ENCODE measurements at regions of chr15 and their contacts with region 1.

Region 1: DNA sequence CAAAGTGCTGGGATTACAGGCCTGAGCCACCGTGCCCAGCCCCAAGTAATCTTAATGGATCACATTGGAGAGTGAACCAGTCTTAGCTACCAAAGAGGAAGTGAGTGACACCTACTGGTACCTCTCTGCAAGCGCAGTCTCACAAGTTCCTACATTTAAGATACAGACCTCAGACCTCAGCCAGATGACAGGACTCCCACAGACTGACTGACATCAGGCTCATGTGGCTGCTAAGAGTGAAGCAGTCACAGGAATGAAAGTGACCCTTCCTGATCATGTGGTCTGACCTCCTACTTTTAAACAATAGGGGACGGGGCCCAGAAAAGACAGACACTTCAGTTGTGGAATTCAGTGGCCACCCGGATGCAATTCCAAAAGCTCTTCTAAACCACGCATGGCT is 36.3 kb upstream of the GNB5 start:
- DNase-seq: peak; percentile 68
- ATAC-seq: peak; percentile 73 to 88

Region 2: DNA sequence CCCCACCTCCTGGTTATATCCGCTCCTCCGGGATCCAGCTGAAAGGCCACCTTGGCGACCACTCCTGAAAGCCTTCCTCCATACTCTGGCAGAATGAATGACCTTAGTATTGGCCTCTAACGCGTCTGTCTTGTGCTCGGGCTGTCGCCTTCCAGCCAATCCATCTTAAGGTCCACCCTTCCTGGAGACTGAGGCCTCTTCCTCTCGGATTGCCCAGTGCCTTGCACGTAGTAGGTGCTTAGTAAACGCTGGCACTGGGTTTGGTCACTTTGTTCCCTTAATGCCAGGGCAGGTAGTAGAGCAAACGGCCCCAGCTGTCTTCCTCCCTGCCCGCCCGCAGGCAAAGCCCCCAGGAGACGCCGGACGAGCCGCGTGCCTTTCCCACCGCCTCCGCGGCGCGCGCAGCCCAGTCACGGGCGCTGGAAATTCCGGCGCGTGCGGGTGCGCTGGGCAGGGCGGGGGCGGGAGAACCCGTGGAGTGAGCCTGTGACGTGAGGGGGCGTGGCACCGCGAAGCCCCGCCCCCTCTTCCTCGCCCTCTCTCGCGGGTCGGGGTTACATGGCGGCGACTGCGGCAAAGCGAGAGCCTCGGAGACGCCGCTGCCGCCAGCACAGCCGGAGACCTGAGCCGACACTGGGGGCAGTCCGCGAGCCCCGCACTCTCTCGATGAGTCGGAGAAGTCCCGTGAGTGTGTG is 208.6 kb before region 1 on chr15 and contains the start of gene MAPK6:
- intact Hi-C with region 1: no loop called
- DNase-seq: peak; percentile 94
- ATAC-seq: peak; percentile 94 to 96
- total RNA-seq, gene MAPK6: 16.6 to 21.5 TPM

Region 3: DNA sequence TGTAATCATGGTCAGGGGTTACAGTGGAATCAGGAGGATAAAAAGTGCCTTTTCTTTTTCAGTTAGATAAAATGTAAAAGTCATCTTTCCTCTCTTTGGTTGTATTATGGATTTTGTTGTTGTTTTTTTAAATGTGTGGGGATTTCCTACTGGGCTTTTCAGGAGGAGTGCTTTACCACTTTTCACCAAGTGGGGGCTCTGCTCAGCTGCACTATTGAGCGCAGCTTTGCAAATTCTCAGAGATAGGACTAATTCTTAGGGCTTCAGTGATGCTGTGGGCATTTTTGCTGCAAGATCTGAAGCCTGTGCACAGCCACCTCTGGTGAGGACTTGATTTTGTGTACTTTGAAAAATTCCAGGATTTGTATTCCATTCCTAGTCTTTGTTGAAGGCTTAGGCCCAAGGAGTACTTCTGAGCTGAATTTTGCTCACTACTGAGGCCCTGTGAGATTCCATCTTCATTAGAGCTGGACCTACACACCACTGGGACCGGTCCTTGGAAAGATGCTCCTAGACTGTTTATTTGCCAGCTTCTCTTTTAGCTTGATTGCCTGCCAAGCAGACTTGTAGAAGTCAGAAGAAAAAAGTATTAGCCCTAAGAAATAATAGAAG is 43.8 kb before region 1 on chr15:
- intact Hi-C with region 1: loop called in 1 of 2 experiments (anchors 2 kb)
- DNase-seq: no peak
- ATAC-seq: no peak